Activated CD4-positive, alpha-beta T cell treated with anti-CD3 and anti-CD28 coated beads for 36 hours (primary cell): ENCODE measurements at regions of chr9 and their contacts with region 1.

Region 1: DNA sequence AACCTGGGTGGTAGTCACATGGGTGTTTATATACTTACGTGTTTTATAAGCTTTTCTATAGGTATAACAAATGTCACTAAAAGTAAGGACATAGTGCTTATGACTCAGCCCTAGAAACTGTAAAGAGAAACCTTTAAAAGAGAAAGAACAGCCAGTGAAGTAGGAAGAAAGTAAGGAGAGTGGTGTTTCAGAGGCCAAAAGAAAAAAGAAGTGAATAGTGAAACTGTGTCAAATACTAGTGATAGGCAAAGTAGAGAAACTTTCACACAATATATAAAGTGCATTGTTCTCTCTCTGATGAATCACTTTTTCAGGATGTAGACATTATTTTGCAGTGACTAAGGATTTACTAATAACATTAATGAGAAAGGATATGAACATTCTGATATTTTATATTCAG is 74.2 kb upstream of the SUSD1 start:
- DNase-seq: no peak
- ATAC-seq: peak; percentile 90
- H3K4me3 Mint-ChIP-seq: no peak overlapping the region
- H3K27ac Mint-ChIP-seq: peak overlapping the region; percentile 17
- H3K4me1 Mint-ChIP-seq: peaks cover 32% of the 10 kb centered on the region
- H3K27me3 Mint-ChIP-seq: no peaks in the 10 kb centered on the region

Region 2: DNA sequence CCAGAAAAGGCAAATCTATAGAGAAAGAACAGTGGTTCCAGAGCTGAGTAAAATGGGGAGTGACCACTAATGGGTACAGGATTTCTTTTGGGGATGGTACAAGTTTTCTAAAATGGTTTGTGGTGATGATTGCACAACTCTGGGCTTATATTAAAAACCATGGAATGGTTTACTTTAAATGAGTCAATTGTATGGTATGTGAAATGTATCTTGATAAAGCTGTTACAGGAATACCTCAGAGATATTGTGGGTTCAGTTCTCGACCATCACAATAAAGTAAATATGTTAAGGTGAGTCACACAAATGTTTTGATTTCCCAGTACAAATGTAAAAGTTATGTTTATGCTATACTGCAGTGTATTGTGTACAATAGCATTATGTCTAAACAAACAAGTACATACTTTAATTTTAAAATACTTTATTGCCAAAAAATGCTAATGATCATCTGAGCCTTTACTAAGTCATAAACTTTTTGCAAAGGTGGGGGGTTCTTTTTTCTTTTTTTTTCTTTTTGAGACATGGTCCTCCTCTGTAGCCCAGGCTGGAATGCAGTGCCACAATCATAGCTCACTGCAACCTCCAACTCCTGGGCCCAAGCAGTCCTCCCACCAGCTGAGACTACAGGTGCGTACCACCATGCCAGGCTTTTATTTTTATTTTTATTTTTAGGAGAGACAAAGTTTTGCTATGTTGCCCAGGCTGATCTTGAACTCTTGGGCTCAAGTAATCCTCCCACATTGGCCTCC is 520.5 kb before region 1 on chr9:
- CTCF ChIA-PET with region 1: no interaction called
- POLR2A ChIA-PET with region 1: no interaction called
- intact Hi-C with region 1: no loop called
- DNase-seq: no peak
- ATAC-seq: no peak
- H3K4me3 Mint-ChIP-seq: no peak overlapping the region
- H3K27ac Mint-ChIP-seq: no peak overlapping the region
- H3K4me1 Mint-ChIP-seq: peaks cover 10% of the 10 kb centered on the region
- H3K27me3 Mint-ChIP-seq: no peaks in the 10 kb centered on the region

Region 3: GRCh38 chr9:112224401-112225289 is 24.6 kb before region 1 on chr9:
- CTCF ChIA-PET with region 1: no interaction called
- POLR2A ChIA-PET with region 1: no interaction called
- intact Hi-C with region 1: no loop called
- DNase-seq: no peak
- ATAC-seq: peak; percentile 74
- H3K4me3 Mint-ChIP-seq: no peak overlapping the region
- H3K27ac Mint-ChIP-seq: no peak overlapping the region
- H3K4me1 Mint-ChIP-seq: peaks cover 12% of the 10 kb centered on the region
- H3K27me3 Mint-ChIP-seq: no peaks in the 10 kb centered on the region

Region 4: DNA sequence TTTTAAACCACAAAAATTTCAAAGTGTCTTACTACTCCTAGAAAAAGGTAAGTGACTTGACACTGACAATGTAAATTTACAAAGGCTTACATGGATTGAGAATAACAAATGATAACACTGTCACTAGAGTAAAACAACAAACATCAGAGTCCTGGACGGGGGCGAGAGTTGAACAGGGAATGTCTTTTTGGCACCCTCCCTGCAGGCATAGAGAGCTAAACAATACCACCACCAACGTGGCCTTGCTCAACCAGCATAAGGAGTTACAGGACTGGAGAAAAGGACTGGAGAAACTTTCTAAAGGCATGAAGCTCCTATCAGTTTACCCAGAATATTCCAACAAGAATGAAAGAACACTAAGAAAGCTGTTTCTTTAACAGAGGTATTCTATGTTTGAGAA is 28.9 kb after region 1 on chr9:
- CTCF ChIA-PET with region 1: no interaction called
- POLR2A ChIA-PET with region 1: no interaction called
- intact Hi-C with region 1: loop called in 1 of 2 experiments (anchors 2 kb)
- DNase-seq: no peak
- ATAC-seq: no peak
- H3K4me3 Mint-ChIP-seq: no peak overlapping the region
- H3K27ac Mint-ChIP-seq: peak overlapping the region; percentile 1
- H3K4me1 Mint-ChIP-seq: peaks cover 60% of the 10 kb centered on the region
- H3K27me3 Mint-ChIP-seq: no peaks in the 10 kb centered on the region

Region 5: DNA sequence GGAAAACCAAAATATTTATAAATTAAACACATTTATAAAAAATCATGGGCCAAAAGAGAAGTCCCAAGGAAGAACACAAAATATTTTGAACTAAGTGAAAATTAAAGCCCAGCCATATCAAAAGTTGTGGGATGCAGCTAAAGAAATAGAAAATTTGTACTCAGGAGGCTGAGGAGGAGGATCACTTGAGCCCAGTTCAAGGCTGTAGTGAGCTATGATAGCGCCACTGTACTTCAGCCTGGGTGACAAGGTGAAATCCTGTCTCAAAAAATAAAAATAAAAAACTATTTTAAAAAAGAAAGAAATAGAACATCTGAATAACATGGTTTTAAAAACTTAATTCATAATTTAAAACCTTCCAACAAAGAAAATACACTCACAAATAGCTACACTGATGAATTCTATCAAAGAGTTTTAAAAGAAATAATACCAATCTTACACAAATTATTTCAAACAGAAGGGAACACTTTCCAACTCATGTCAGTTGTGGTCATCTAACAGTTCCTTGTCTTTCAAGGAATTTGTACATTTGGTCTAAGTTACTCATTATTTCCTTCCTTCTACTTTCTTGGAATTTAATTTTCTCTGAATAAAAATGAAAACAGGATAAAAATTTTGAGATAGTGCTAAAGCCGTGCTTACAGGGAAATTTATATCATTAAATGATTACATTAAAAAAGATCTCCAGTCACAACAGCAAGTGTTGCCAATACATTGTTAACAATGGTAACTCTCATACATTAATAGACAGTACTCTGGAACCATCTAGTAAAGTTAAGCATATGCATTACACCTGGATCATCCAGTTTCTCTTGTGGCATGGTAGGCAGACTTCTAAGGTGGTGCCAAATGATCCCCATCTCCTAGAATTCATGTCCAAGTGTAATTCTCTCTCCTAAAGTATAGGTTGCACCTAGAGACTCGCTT is 66.3 kb after region 1 on chr9:
- CTCF ChIA-PET with region 1: no interaction called
- POLR2A ChIA-PET with region 1: no interaction called
- intact Hi-C with region 1: loop called in 1 of 2 experiments (anchors 2 kb)
- DNase-seq: no peak
- ATAC-seq: no peak
- H3K4me3 Mint-ChIP-seq: no peak overlapping the region
- H3K27ac Mint-ChIP-seq: peak overlapping the region; percentile 88
- H3K4me1 Mint-ChIP-seq: peaks cover 71% of the 10 kb centered on the region
- H3K27me3 Mint-ChIP-seq: no peaks in the 10 kb centered on the region